Dendritic cell treated with granulocyte-macrophage colony-stimulating factor and Interleukin-4, amounts not matched to agents 40 ng/mL and 50 ng/mL, for 4 days (primary cell): ENCODE measurements at regions of chr16 and their contacts with region 1.

Region 1: GRCh38 chr16:56203052-56203451 is 11.8 kb downstream of the GNAO1 start:
- H3K4me3 Mint-ChIP-seq: no peak overlapping the region
- H3K27ac Mint-ChIP-seq: no peak overlapping the region
- H3K4me1 Mint-ChIP-seq: peaks cover 14% of the 10 kb centered on the region
- H3K27me3 Mint-ChIP-seq: peaks cover 16% of the 10 kb centered on the region

Region 2: DNA sequence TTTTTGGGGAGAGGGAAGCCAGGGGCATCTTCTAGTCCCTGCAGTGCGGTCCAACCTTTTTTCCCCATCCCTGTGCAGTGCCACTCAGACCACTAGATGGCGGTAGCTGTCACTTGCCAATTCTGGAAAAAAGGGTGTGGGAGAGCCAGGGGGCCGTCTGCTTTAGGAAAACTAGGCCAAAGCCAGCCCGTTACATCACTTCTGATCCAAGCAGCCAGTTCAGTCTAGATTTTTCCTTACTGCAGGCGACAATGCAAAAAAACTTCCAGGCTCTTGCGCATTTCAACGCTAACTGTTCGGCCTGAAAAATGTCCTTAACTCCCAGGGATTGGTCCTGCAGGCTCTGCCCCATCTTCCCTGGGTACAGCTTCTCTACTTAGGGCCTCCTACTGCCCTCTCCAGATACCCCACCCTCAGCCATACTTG is 258.7 kb before region 1 on chr16:
- intact Hi-C with region 1: loop called (anchors 1 kb)
- H3K4me3 Mint-ChIP-seq: no peak overlapping the region
- H3K27ac Mint-ChIP-seq: no peak overlapping the region
- H3K4me1 Mint-ChIP-seq: no peaks in the 10 kb centered on the region
- H3K27me3 Mint-ChIP-seq: peaks cover 31% of the 10 kb centered on the region

Region 3: DNA sequence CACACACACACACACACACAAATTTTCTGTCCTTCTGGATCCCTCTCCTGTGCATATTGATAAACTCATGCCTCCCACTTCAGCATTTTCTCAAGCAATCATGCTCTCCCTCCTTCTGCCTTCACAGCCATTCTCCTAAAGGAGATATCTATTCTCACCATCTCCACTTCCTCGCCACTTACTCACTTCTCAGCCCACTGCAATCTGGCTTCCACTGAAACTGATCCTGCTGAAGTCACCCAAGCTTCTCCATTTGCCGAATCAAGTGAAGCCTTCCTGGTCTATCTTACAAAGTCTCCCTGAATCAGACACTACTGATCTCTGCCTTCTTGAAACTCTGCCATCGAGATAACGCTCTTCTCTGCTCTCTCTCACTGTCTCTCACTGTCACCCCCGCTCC is 65.8 kb before region 1 on chr16:
- intact Hi-C with region 1: no loop called
- H3K4me3 Mint-ChIP-seq: no peak overlapping the region
- H3K27ac Mint-ChIP-seq: no peak overlapping the region
- H3K4me1 Mint-ChIP-seq: peaks cover 8% of the 10 kb centered on the region
- H3K27me3 Mint-ChIP-seq: peaks cover 5% of the 10 kb centered on the region

Region 4: DNA sequence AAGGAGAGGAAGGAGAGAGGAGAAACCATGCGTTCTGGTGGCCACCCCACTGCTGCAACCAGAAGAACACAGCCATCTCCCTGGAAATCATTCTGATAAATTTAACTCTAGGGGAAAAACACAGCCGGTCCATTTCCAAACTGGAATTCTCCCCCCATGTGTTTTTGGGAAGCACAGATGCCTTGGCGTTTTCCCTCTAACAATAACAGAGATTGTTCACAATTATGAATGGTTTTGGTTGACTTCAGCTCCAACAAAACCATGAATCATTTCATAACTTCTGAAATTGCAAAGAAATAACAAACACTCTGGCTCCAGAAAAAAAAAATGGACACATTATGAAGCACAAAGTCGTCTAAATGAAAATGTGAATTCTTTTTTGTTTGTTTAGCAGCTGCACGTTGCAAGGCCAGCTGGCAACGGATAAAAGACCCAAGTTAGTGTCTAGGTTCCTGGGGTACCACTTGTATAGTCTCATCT is 34.4 kb after region 1 on chr16:
- intact Hi-C with region 1: no loop called
- H3K4me3 Mint-ChIP-seq: no peak overlapping the region
- H3K27ac Mint-ChIP-seq: no peak overlapping the region
- H3K4me1 Mint-ChIP-seq: peaks cover 8% of the 10 kb centered on the region
- H3K27me3 Mint-ChIP-seq: no peaks in the 10 kb centered on the region